ENCODE measurements at regions of chr6 and their contacts with region 1.

Region 1: DNA sequence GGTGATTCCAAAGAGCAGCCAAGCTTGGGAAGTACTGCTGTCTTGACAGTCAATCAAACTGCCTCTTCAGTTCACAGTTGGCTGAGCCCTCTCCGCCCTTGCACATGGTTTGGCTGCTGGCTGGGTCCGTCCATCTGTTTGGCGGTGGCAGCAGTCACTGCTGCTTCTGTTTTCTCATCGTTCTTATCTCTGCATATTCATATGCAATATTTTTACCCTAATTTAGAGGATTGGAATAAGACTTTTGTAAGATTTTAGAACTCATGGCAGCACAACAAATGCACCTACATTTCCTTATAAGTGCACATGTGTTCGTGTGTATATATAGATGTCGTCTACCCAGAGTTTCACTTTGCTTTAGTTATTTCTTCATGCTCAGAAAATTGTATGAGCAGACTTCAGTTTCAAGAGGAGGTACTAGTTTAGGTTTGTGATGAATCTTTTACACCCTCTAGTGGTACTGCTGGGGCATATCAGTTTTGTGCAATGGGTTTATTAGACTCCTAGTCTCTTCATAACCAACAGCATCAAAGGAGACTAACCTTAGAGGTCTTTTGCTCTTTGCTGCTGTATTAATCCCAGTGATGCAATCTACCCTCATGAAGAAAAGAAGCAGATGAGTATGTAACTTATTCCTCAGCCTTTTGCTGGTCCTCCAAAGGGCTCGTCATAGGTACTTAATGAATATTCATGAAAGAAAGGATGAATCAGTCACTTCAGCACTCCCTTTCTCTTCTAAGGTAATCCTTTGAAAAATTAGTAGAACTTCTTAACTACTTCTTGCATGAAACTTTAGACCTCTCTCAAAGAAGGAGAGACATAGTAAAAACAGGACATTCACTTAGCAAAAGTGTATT is 44.3 kb downstream of the KHDC1L start:
- DNase-seq: peak in 4 of 14 experiments; percentile 5 to 60 (median 58)
- ATAC-seq: peak; percentile 67
- H3K4me3 ChIP-seq: no peak overlapping the region
- H3K4me3 Mint-ChIP-seq: peak overlapping the region; percentile 16
- H3K27ac ChIP-seq: no peak overlapping the region
- H3K27ac Mint-ChIP-seq: no peak overlapping the region
- H3K4me1 ChIP-seq: peaks cover 3% of the 10 kb centered on the region
- H3K4me1 Mint-ChIP-seq: no peaks in the 10 kb centered on the region
- H3K27me3 ChIP-seq: no peaks in the 10 kb centered on the region
- H3K27me3 Mint-ChIP-seq: no peaks in the 10 kb centered on the region
- CTCF ChIP-seq: peak; percentile 80

Region 2: DNA sequence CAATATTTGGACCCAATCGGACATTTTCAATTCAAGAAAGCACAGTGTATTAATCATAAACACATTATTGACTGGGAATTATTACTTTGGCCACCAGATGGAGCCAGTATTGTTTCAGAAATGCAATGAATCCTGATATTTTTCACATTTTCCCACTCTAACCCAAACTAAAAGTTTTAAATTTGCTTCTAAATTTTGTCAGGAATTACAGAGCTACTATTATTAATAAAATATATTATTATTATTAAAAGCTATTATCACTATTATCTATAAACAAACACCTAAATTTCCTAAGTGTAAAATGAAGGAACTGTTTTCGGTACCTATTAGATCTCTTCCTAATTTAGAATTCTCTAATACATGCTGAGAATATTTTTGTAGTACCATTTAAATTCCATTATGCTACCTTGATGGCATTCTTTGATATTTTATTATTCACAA is 1647.0 kb before region 1 on chr6:
- CTCF ChIA-PET with region 1: no interaction called
- POLR2A ChIA-PET with region 1: no interaction called
- intact Hi-C with region 1: loop called (anchors 5 kb)
- DNase-seq: peak in 1 of 14 experiments; percentile 5
- ATAC-seq: no peak
- H3K4me3 ChIP-seq: no peak overlapping the region
- H3K4me3 Mint-ChIP-seq: no peak overlapping the region
- H3K27ac ChIP-seq: no peak overlapping the region
- H3K27ac Mint-ChIP-seq: no peak overlapping the region
- H3K4me1 ChIP-seq: no peaks in the 10 kb centered on the region
- H3K4me1 Mint-ChIP-seq: no peaks in the 10 kb centered on the region
- H3K27me3 ChIP-seq: no peaks in the 10 kb centered on the region
- H3K27me3 Mint-ChIP-seq: peaks cover 13% of the 10 kb centered on the region
- CTCF ChIP-seq: peak; percentile 62

Region 3: DNA sequence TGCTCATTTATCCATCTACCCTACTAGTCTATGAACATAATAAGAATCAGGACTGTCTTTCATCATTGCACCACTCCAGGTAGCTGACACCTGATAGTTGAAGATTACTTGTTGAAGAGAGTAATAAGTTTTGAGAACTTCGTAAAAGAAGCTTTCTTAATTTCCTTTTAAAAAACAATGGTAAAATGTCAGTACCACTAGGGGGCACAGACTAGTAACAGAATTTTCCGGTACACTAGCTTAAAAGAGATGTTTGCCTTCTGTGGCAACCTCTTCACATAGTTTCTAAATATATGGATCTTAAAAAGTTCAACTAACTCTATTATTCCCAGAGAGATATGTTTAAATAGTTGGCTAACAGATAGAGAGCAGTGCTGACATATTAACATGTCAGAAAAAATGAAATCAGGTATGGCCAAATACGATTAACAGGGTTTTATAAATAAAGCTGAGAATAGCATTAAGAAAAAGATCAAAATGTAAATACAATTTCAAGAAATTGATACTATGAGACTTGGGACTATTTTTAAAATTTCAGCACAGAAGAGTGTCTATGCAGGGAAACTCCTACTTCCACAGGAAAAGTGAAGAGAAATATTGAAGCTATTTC is 564.5 kb before region 1 on chr6:
- CTCF ChIA-PET with region 1: no interaction called
- POLR2A ChIA-PET with region 1: no interaction called
- intact Hi-C with region 1: loop called in 1 of 2 experiments (anchors 2 kb)
- DNase-seq: peak in 3 of 14 experiments; percentile 45 to 63 (median 54)
- ATAC-seq: no peak
- H3K4me3 ChIP-seq: no peak overlapping the region
- H3K4me3 Mint-ChIP-seq: peak overlapping the region; percentile 23
- H3K27ac ChIP-seq: no peak overlapping the region
- H3K27ac Mint-ChIP-seq: peak overlapping the region; percentile 4
- H3K4me1 ChIP-seq: peaks cover 23% of the 10 kb centered on the region
- H3K4me1 Mint-ChIP-seq: peaks cover 43% of the 10 kb centered on the region
- H3K27me3 ChIP-seq: no peaks in the 10 kb centered on the region
- H3K27me3 Mint-ChIP-seq: peaks cover 13% of the 10 kb centered on the region
- CTCF ChIP-seq: peak; percentile 63